Caco-2 (cell line): ENCODE measurements at regions of chr11 and their contacts with region 1.

Region 1: DNA sequence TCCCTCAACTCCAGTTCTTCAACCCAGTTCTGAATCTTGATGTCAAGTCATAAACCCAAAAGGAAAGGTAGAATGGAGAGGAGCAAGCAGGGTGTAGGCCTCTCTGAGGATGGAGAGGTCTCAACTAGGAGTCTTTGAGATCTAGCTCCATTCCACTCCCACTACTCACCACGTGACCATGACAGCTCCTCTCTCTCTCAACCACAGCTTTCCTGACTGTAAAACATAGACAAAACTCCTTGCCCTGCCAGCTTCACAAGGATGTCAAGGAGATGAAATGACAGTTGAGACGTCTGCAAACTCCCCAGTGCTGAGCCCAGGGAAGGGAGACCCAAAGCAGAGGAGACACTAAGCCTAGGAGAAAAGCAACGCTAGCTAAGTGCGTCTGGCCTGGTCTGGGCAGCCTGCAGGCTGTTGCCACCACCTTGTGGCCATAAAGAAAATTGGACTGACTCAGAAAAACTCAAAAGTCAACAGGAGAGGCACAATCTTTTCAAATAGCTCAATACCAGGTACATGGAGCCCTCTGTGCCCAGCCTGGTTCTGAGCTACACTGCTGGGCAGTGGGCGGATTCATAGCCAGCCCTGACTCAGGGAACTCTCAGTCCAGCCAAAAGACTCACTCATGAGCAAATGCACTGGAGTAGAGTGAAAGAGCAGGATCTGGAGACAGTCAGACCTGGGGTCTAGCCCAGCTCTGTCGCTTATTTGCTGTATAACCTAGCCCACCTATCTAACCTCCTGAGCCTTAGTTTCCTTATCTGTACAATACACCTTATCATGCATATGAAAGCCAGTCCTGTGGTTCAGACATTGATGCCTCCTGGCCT is 3.4 kb downstream of the CLPB start:
- DNase-seq: peak; percentile 63 to 68
- H3K4me3 ChIP-seq: no peak overlapping the region
- H3K4me3 Mint-ChIP-seq: no peak overlapping the region
- H3K27ac Mint-ChIP-seq: no peak overlapping the region
- H3K4me1 ChIP-seq: peaks cover 9% of the 10 kb centered on the region; the same call in 1 of the 2 replicates
- H3K4me1 Mint-ChIP-seq: peaks cover 18% of the 10 kb centered on the region
- H3K27me3 ChIP-seq: no peaks in the 10 kb centered on the region
- H3K27me3 Mint-ChIP-seq: no peaks in the 10 kb centered on the region
- CTCF ChIP-seq: peak; percentile 93 to 94

Region 2: DNA sequence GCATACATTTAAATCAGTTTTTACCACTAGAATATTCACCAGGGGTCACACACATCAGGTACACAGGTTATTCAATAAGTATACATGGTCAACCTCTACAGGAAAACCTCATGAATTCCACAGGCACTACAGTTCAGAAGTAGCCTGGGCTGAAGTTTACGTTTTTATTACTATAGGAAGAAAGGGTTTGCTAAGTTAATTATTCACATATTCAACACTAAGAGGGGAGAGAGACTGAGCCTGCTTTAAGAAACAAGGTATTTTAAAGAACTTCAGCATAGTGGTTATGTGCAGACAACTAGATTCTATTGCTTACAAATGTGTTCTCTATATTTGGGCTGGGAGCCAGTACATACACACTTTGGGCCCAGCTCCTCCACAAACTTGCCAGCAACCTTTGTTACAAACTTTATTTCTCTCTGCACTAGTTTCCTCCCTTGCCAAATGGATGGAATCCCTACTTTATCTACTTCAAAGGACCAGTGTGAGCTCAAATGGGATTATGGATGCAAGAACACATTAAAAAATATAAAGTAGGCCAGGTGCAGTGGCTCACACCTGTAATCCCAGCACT is 400.4 kb before region 1 on chr11:
- CTCF ChIA-PET with region 1: interaction called, 33 read pairs
- POLR2A ChIA-PET with region 1: interaction called, 3 read pairs
- intact Hi-C with region 1: loop called (anchors 1 kb)
- DNase-seq: no peak
- H3K4me3 ChIP-seq: no peak overlapping the region
- H3K4me3 Mint-ChIP-seq: no peak overlapping the region
- H3K27ac Mint-ChIP-seq: peak overlapping the region; percentile 58
- H3K4me1 ChIP-seq: peaks cover 9% of the 10 kb centered on the region
- H3K4me1 Mint-ChIP-seq: peaks cover 12% of the 10 kb centered on the region
- H3K27me3 ChIP-seq: no peaks in the 10 kb centered on the region
- H3K27me3 Mint-ChIP-seq: no peaks in the 10 kb centered on the region
- CTCF ChIP-seq: no peak

Region 3: GRCh38 chr11:72091005-72091691 is 339.8 kb before region 1 on chr11:
- CTCF ChIA-PET with region 1: interaction called, 15 read pairs
- POLR2A ChIA-PET with region 1: no interaction called
- intact Hi-C with region 1: no loop called
- DNase-seq: peak; percentile 88 to 91
- H3K4me3 ChIP-seq: no peak overlapping the region
- H3K4me3 Mint-ChIP-seq: no peak overlapping the region
- H3K27ac Mint-ChIP-seq: no peak overlapping the region
- H3K4me1 ChIP-seq: peaks cover 6% of the 10 kb centered on the region
- H3K4me1 Mint-ChIP-seq: peaks cover 14% of the 10 kb centered on the region
- H3K27me3 ChIP-seq: no peaks in the 10 kb centered on the region
- H3K27me3 Mint-ChIP-seq: no peaks in the 10 kb centered on the region
- CTCF ChIP-seq: peak; percentile 97 to 99

Region 4: GRCh38 chr11:72328366-72329224 is 102.4 kb before region 1 on chr11:
- CTCF ChIA-PET with region 1: interaction called, 40 read pairs
- POLR2A ChIA-PET with region 1: no interaction called
- intact Hi-C with region 1: loop called (anchors 1 kb)
- DNase-seq: peak in 1 of 2 experiments; percentile 34
- H3K4me3 ChIP-seq: no peak overlapping the region
- H3K4me3 Mint-ChIP-seq: no peak overlapping the region
- H3K27ac Mint-ChIP-seq: no peak overlapping the region
- H3K4me1 ChIP-seq: no peaks in the 10 kb centered on the region
- H3K4me1 Mint-ChIP-seq: peaks cover 1% of the 10 kb centered on the region
- H3K27me3 ChIP-seq: no peaks in the 10 kb centered on the region
- H3K27me3 Mint-ChIP-seq: no peaks in the 10 kb centered on the region
- CTCF ChIP-seq: peak; percentile 45 to 46

Region 5: DNA sequence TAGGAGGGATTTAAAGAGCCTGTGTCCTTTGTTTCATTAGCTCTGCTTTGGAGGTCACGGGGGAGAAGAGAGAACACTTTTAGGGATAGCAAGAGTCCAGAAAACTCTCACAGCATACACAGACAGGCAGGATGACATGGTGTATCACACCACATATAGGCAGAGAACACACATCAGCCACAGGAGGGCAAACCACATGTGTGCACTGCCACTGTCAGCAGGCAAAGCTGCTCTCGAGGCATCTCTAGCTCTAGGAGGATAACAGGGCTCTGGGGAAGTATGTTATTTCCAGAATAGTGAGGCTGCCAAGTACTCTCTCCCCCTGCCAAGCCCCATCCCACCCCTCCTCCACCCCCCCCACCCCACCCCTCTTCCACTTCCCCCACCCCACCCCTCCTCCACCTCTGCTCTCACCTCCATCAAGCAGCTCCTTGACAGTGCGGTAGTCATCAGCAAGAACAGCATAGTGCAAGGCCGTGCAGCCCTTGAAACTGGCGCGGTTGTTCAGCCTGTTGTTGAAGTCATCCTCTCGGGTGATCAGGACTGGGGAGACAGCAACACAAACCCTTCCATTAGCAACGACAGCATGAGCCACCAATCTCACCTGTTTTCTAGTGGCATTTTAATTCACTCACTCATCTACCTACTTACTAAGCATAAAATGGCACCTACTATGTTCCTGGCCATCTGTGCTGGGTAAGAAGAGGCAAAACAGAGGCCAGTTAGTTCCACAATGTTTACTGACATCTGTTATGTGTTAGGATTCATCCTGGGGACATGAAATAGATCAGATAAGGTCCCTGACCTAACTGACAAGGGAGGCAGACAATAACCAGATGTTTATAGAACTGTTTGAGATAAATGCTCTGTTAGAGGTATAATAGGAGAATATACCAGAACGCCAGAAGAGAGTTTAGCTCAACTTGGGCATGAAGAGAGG is 72.2 kb before region 1 on chr11:
- CTCF ChIA-PET with region 1: interaction called, 83 read pairs
- POLR2A ChIA-PET with region 1: no interaction called
- intact Hi-C with region 1: loop called (anchors 1 kb)
- DNase-seq: no peak
- H3K4me3 ChIP-seq: no peak overlapping the region
- H3K4me3 Mint-ChIP-seq: no peak overlapping the region
- H3K27ac Mint-ChIP-seq: no peak overlapping the region
- H3K4me1 ChIP-seq: peaks cover 7% of the 10 kb centered on the region; the same call in 1 of the 2 replicates
- H3K4me1 Mint-ChIP-seq: peaks cover 15% of the 10 kb centered on the region
- H3K27me3 ChIP-seq: no peaks in the 10 kb centered on the region
- H3K27me3 Mint-ChIP-seq: no peaks in the 10 kb centered on the region
- CTCF ChIP-seq: no peak

Region 6: GRCh38 chr11:72446902-72447769 is 16.2 kb after region 1 on chr11:
- CTCF ChIA-PET with region 1: interaction called, 18 read pairs
- POLR2A ChIA-PET with region 1: no interaction called
- intact Hi-C with region 1: loop called (anchors 1 kb)
- DNase-seq: peak in 1 of 2 experiments; percentile 68
- H3K4me3 ChIP-seq: no peak overlapping the region
- H3K4me3 Mint-ChIP-seq: no peak overlapping the region
- H3K27ac Mint-ChIP-seq: no peak overlapping the region
- H3K4me1 ChIP-seq: no peaks in the 10 kb centered on the region
- H3K4me1 Mint-ChIP-seq: no peaks in the 10 kb centered on the region
- H3K27me3 ChIP-seq: no peaks in the 10 kb centered on the region
- H3K27me3 Mint-ChIP-seq: peaks cover 10% of the 10 kb centered on the region
- CTCF ChIP-seq: peak; percentile 93 to 96

Region 7: DNA sequence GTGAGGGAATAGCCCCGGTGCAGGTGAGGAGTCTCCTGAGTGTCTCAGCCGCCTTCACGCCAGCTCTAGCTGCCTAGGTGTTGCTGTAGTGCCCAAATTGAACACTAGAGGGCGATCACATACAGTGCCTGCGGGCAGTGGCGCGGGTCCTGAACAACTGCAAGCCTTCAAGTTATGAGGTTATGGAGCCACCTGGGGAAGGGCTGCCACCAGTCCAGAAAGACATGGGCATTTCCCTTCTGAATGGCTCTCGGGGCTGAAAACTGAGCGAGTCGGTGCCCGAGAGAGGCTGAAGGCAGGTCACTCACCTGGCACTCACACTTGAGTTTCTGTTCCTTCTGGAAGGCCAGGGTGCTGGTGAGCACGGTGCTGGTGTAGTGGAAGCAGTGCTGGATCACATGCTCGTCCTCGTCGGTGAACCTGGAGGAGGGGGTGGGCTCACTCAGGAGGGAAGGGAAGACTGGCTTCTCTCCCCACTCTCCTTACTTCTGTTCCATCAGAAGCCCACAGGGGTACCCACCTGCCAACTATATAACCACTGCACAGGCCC is 154.9 kb after region 1 on chr11:
- CTCF ChIA-PET with region 1: no interaction called
- POLR2A ChIA-PET with region 1: no interaction called
- intact Hi-C with region 1: no loop called
- DNase-seq: peak; percentile 75 to 86
- H3K4me3 ChIP-seq: no peak overlapping the region
- H3K4me3 Mint-ChIP-seq: no peak overlapping the region
- H3K27ac Mint-ChIP-seq: no peak overlapping the region
- H3K4me1 ChIP-seq: no peaks in the 10 kb centered on the region
- H3K4me1 Mint-ChIP-seq: no peaks in the 10 kb centered on the region
- H3K27me3 ChIP-seq: peaks cover under 1% of the 10 kb centered on the region; the same call in 1 of the 2 replicates
- H3K27me3 Mint-ChIP-seq: peaks cover 7% of the 10 kb centered on the region
- CTCF ChIP-seq: peak; percentile 97 to 98